HCT116 (cell line): ENCODE measurements at regions of chr12 and their contacts with region 1.

Region 1: DNA sequence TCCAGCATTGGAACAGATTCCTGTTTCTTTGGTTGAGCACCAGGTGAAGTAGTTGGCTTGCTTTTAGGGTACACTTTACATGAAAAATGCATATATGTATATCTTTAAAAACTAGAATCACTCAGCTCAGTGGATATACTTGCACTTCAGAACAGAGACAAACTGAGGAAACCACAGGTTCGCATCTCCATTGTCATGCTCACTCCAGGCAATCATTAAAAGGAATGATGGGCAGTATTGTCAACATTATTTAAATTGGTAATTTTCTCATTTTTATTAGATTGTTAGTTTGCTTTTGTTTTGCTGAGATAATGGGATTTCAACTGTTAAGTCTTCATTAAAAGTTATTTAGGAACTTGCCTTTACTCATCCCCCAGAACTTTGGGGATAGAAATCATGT is 71.0 kb upstream of the NELL2 start:
- DNase-seq: no peak
- ATAC-seq: no peak
- H3K4me3 ChIP-seq: no peak overlapping the region
- H3K27ac ChIP-seq: no peak overlapping the region
- H3K4me1 ChIP-seq: no peaks in the 10 kb centered on the region; a peak in 2 of 4 replicates
- H3K27me3 ChIP-seq: no peaks in the 10 kb centered on the region
- CTCF ChIP-seq: no peak
- POLR2A ChIP-seq: no peak
- RAD21 ChIP-seq: no peak

Region 2: GRCh38 chr12:44240186-44240585 is 707.0 kb before region 1 on chr12:
- CTCF ChIA-PET with region 1: no interaction called
- POLR2A ChIA-PET with region 1: no interaction called
- RAD21 ChIA-PET with region 1: no interaction called
- intact Hi-C with region 1: no loop called
- DNase-seq: no peak
- ATAC-seq: no peak
- H3K4me3 ChIP-seq: no peak overlapping the region
- H3K27ac ChIP-seq: no peak overlapping the region
- H3K4me1 ChIP-seq: no peaks in the 10 kb centered on the region
- H3K27me3 ChIP-seq: no peaks in the 10 kb centered on the region
- CTCF ChIP-seq: no peak
- POLR2A ChIP-seq: no peak
- RAD21 ChIP-seq: no peak

Region 3: GRCh38 chr12:44835641-44836379 is 111.4 kb before region 1 on chr12:
- CTCF ChIA-PET with region 1: no interaction called
- POLR2A ChIA-PET with region 1: no interaction called
- RAD21 ChIA-PET with region 1: no interaction called
- intact Hi-C with region 1: no loop called
- DNase-seq: no peak
- ATAC-seq: no peak
- H3K4me3 ChIP-seq: no peak overlapping the region
- H3K27ac ChIP-seq: no peak overlapping the region
- H3K4me1 ChIP-seq: no peaks in the 10 kb centered on the region
- H3K27me3 ChIP-seq: no peaks in the 10 kb centered on the region
- CTCF ChIP-seq: no peak
- POLR2A ChIP-seq: no peak
- RAD21 ChIP-seq: no peak

Region 4: DNA sequence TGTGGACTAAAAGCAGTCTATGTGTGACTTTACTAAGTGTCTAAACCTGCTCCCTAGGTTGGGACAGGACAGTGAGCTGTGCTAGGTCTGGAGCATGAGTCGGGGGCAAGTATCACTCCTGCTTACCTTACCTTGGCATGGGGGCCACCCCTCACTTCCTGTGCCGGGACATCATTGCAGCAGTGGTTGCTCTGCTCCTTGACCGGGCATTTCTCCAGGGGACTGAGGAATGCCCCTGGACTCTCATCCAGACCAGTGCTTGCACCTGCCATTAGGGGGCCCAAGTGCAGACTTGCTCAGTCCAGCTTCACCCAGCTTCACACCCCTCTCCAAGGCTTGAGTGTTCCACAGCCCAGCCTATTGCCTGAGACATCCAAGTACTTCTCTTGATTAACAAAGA is 13.7 kb after region 1 on chr12:
- CTCF ChIA-PET with region 1: interaction called, 12 read pairs
- POLR2A ChIA-PET with region 1: no interaction called
- RAD21 ChIA-PET with region 1: no interaction called
- intact Hi-C with region 1: no loop called
- DNase-seq: peak; percentile 19
- ATAC-seq: peak; percentile 98
- H3K4me3 ChIP-seq: no peak overlapping the region
- H3K27ac ChIP-seq: no peak overlapping the region
- H3K4me1 ChIP-seq: no peaks in the 10 kb centered on the region
- H3K27me3 ChIP-seq: no peaks in the 10 kb centered on the region
- CTCF ChIP-seq: peak in 2 of 3 experiments; percentile 49 to 51; a peak in 4 of 6 replicates
- POLR2A ChIP-seq: no peak
- RAD21 ChIP-seq: no peak

Region 5: GRCh38 chr12:44972746-44973421 is 25.7 kb after region 1 on chr12:
- CTCF ChIA-PET with region 1: interaction called, 16 read pairs
- POLR2A ChIA-PET with region 1: no interaction called
- RAD21 ChIA-PET with region 1: no interaction called
- intact Hi-C with region 1: no loop called
- DNase-seq: peak; percentile 22
- ATAC-seq: peak; percentile 99
- H3K4me3 ChIP-seq: no peak overlapping the region
- H3K27ac ChIP-seq: no peak overlapping the region
- H3K4me1 ChIP-seq: no peaks in the 10 kb centered on the region
- H3K27me3 ChIP-seq: no peaks in the 10 kb centered on the region
- CTCF ChIP-seq: peak; percentile 22 to 84 (median 69); a peak in 4 of 6 replicates
- POLR2A ChIP-seq: no peak
- RAD21 ChIP-seq: peak; percentile 33